CD14-positive monocyte (primary cell): ENCODE measurements at regions of chr16 and their contacts with region 1.

Region 1: GRCh38 chr16:31371619-31372484 is 16.9 kb downstream of the ITGAX start:
- DNase-seq: no peak
- H3K4me3 ChIP-seq: no peak overlapping the region
- H3K4me3 Mint-ChIP-seq: no peak overlapping the region
- H3K27ac ChIP-seq: no peak overlapping the region
- H3K27ac Mint-ChIP-seq: peak overlapping the region in 2 of 7 donors; percentile 0 to 27
- H3K4me1 ChIP-seq: peaks cover 19 to 21% of the 10 kb centered on the region in 2 donors
- H3K4me1 Mint-ChIP-seq: peaks cover 22% of the 10 kb centered on the region
- H3K27me3 ChIP-seq: no peaks in the 10 kb centered on the region
- H3K27me3 Mint-ChIP-seq: no peaks in the 10 kb centered on the region
- CTCF ChIP-seq: no peak

Region 2: GRCh38 chr16:31265329-31266245 is 106.3 kb before region 1 on chr16:
- intact Hi-C with region 1: no loop called
- DNase-seq: peak; percentile 78 to 90 (median 81)
- H3K4me3 ChIP-seq: no peak overlapping the region
- H3K4me3 Mint-ChIP-seq: peak overlapping the region; percentile 37 to 81
- H3K27ac ChIP-seq: peak overlapping the region in 1 of 2 donors; percentile 75
- H3K27ac Mint-ChIP-seq: peak overlapping the region; percentile 67 to 89 (median 79)
- H3K4me1 ChIP-seq: peaks cover 49 to 59% of the 10 kb centered on the region in 2 donors
- H3K4me1 Mint-ChIP-seq: peaks cover 55% of the 10 kb centered on the region
- H3K27me3 ChIP-seq: no peaks in the 10 kb centered on the region
- H3K27me3 Mint-ChIP-seq: peaks cover 0 to 8% (median 2%) of the 10 kb centered on the region in 3 donors
- CTCF ChIP-seq: no peak

Region 3: DNA sequence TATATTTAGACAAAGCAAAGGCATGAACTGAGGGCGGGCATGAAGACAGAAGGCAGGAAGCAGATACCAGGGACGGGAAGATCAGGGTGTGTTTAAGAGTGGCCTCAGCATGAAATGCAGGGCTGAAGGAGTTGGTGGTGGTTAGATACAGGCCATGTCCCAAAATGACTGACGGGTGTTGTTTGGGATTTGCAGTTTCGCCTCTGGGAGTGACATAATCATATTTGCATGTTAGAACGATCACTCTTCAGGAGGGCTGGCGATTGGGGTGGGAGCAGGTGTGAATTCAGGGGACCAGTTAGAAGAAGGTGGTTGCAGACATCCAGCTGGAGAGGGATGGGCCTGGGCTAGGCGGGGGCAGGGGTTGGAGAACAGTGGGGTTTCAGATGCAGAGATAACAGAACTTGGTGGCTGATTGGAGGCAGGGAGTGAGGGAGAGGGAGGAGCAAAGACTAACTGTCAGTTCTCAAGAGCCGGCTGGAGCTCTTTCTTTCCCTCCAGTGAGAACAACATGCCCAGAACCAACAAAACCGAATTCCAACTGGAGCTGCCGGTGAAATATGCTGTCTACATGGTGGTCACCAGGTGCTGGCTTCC is 44.1 kb before region 1 on chr16:
- intact Hi-C with region 1: loop called (anchors 5 to 10 kb)
- DNase-seq: no peak
- H3K4me3 ChIP-seq: no peak overlapping the region
- H3K4me3 Mint-ChIP-seq: no peak overlapping the region
- H3K27ac ChIP-seq: no peak overlapping the region
- H3K27ac Mint-ChIP-seq: peak overlapping the region in 2 of 7 donors; percentile 2 to 34
- H3K4me1 ChIP-seq: no peaks in the 10 kb centered on the region
- H3K4me1 Mint-ChIP-seq: peaks cover 14% of the 10 kb centered on the region
- H3K27me3 ChIP-seq: no peaks in the 10 kb centered on the region
- H3K27me3 Mint-ChIP-seq: peaks cover 0 to 2% (median 2%) of the 10 kb centered on the region in 3 donors
- CTCF ChIP-seq: no peak

Region 4: DNA sequence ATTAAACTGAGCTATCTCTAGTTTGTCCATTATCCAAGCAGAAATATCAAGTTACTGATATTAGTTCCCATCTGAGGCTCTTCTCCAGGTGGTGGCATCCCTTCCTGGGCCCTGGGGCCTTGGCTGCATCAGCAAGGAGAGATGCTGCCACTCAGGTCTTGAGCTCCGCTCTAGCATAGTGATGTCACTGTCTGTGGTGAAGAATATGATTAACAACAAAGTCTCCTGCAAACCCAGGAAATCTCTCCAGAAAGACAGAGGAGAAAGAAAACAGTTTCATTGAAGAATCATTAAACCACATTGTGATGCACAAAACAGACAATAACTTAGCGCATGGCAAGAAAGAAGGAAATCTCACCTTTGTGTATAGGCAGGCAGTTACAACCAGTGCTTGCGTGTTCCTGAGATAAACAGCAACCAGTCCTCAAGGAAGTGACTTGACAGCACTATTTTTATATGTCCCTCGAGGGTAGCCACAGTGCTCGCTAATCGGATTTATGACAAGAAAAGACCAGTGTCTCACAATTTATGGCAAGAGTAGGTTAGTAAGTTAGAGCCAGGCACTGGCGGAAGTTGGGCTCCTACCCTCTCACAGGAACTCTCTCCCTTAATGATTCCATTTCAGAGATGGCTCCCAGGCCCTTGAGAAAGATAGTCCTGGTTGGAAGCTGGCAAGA is 306.9 kb after region 1 on chr16:
- intact Hi-C with region 1: no loop called
- DNase-seq: no peak
- H3K4me3 ChIP-seq: no peak overlapping the region
- H3K4me3 Mint-ChIP-seq: no peak overlapping the region
- H3K27ac ChIP-seq: no peak overlapping the region
- H3K27ac Mint-ChIP-seq: no peak overlapping the region
- H3K4me1 ChIP-seq: no peaks in the 10 kb centered on the region
- H3K4me1 Mint-ChIP-seq: no peaks in the 10 kb centered on the region
- H3K27me3 ChIP-seq: no peaks in the 10 kb centered on the region
- H3K27me3 Mint-ChIP-seq: peaks cover 0 to 2% (median 0%) of the 10 kb centered on the region in 3 donors
- CTCF ChIP-seq: no peak